ENCODE measurements at regions of chr1 and their contacts with region 1.

Region 1: DNA sequence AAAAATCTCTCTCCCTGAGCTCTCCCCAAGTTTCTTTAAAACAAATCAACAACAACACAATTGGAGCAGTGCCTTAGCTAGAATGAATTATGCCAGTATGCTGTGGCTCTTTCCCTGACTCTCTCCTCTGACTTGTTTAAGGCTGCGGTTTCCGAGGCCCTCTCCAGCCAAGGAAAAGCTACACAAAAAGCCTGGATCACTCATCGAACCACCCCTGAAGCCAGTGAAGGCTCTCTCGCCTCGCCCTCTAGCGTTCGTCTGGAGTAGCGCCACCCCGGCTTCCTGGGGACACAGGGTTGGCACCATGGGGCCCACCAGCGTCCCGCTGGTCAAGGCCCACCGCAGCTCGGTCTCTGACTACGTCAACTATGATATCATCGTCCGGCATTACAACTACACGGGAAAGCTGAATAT is 1.9 kb downstream of the S1PR1 start:
- DNase-seq: peak; percentile 95
- ATAC-seq: peak; percentile 30
- H3K4me3 Mint-ChIP-seq: peak overlapping the region; percentile 89
- H3K27ac Mint-ChIP-seq: peak overlapping the region; percentile 99
- H3K4me1 Mint-ChIP-seq: peaks cover 51% of the 10 kb centered on the region
- H3K27me3 Mint-ChIP-seq: no peaks in the 10 kb centered on the region

Region 2: DNA sequence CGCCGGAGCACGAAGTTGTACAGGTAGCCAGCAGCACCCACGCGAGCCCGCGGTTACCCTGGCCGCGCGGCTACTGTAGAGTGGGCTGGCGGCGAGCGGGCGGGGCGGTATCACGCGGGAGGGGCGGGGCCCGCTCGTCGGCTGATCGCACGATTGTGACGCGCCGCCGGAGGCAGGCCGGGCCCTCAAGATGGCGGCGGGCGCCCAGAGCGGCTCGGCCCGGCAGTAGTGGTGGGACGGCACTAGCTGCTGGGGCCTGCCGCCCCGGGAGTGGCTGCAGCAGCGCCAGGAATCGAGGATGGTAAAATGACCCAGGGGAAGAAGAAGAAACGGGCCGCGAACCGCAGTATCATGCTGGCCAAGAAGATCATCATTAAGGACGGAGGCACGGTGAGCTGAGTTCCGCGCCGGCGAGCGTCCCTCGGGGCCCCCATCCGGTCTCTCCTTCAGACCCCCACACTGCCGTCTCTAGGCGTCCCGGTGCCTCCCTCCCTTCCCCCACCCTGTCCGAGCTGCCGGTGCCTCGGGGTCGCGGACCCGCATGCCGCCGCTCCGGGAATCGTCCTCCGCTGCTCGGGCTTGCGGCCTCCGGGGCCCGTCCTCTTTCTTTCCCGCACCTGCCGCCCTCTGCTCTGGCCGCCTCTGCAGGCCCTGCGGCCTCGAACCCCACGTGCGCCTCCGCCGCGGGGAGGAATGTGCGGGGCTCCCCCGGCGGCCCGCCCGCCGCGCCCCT is 1200.6 kb before region 1 on chr1:
- CTCF ChIA-PET with region 1: no interaction called
- POLR2A ChIA-PET with region 1: no interaction called
- intact Hi-C with region 1: loop called (anchors 5 kb)
- DNase-seq: peak; percentile 95
- ATAC-seq: peak; percentile 80
- H3K4me3 Mint-ChIP-seq: peak overlapping the region; percentile 95
- H3K27ac Mint-ChIP-seq: peak overlapping the region; percentile 98
- H3K4me1 Mint-ChIP-seq: peaks cover 51% of the 10 kb centered on the region
- H3K27me3 Mint-ChIP-seq: no peaks in the 10 kb centered on the region

Region 3: DNA sequence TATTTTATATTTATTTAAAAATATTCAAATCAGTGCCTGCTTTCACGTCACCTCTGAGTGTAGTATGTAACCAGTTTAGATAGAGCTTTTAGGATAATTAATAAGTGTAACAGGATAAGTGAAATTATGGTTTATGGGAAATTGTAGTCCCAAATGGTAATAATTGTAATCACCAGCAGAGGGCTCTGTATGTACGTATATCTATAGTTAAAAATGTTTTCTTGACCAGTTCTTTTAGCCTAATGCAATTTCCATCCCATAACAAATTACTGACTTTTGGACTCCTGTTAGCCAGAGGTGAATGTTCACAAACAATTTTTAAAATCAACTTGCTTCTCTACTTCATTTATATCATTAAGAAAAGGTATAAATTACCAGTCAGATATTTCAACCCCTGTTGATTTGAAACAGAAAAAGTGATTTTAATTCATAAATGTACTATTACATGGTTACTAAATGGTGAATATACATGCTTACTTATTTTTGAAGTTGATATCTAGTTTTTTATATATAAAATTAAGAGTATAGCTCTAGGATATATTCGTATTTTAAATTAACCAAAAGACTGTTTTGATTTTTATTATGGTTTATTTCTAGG is 317.5 kb before region 1 on chr1:
- CTCF ChIA-PET with region 1: interaction called, 7 read pairs
- POLR2A ChIA-PET with region 1: no interaction called
- intact Hi-C with region 1: loop called (anchors 1 kb)
- DNase-seq: no peak
- ATAC-seq: no peak
- H3K4me3 Mint-ChIP-seq: no peak overlapping the region
- H3K27ac Mint-ChIP-seq: peak overlapping the region; percentile 70
- H3K4me1 Mint-ChIP-seq: peaks cover 43% of the 10 kb centered on the region
- H3K27me3 Mint-ChIP-seq: no peaks in the 10 kb centered on the region

Region 4: DNA sequence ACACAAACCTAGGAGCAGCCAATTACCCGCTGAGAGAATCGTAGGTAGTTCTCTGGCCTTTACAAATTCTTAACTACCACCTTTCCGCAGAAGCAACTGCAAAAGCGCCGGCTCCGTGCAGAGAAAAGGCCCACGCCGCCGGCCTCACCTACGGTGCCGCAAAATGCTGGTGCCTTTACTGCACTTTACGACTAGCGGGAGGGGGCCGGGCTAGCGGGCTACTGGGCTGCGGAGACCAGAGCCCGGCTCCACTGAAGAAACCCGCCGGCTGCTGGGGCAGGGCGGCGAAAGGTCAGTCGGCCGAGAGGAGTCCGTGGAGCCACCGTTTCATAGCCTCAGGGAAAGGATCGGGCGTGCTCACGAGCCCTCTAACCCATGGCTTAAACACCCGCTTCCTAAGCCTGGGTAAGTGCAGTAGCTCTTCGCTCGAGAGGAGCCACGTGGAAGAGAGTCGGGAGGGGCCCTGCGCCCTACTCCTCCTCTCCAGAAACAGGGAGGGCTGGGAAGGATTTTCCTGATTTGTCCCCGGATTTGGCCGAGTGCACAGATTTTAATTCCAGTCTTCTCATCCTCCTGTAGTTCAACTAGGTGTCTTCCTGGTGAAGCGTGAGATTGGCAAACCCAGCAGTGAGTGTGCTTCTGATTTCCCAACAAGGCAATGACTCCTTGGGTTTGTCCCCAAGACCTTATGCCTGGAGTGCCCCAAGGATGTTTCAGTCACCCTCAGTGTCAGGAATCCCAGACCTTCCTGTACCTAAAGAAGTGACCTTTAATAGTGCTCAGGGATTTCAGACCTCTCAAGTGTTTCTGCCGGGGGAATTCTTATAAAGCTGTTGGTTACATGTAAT is 212.8 kb before region 1 on chr1 and contains the start of gene DPH5:
- CTCF ChIA-PET with region 1: interaction called, 5 read pairs
- POLR2A ChIA-PET with region 1: interaction called, 6 read pairs
- intact Hi-C with region 1: loop called (anchors 1 kb)
- DNase-seq: peak; percentile 95
- ATAC-seq: peak; percentile 96
- H3K4me3 Mint-ChIP-seq: peak within 1 kb of the TSS; percentile 93
- H3K27ac Mint-ChIP-seq: peak within 1 kb of the TSS; percentile 98
- H3K4me1 Mint-ChIP-seq: peaks cover 55% of the 10 kb centered on the region
- H3K27me3 Mint-ChIP-seq: no peaks in the 10 kb centered on the region
- total RNA-seq, gene DPH5: 48.4 to 59.6 TPM

Region 5: GRCh38 chr1:101136739-101137138 is 101.9 kb before region 1 on chr1:
- CTCF ChIA-PET with region 1: interaction called, 32 read pairs
- POLR2A ChIA-PET with region 1: interaction called, 13 read pairs
- intact Hi-C with region 1: loop called (anchors 1 kb)
- DNase-seq: peak; percentile 45
- ATAC-seq: peak; percentile 85
- H3K4me3 Mint-ChIP-seq: peak overlapping the region; percentile 38
- H3K27ac Mint-ChIP-seq: peak overlapping the region; percentile 91
- H3K4me1 Mint-ChIP-seq: peaks cover 69% of the 10 kb centered on the region
- H3K27me3 Mint-ChIP-seq: no peaks in the 10 kb centered on the region

Region 6: GRCh38 chr1:101205457-101205856 is 33.2 kb before region 1 on chr1:
- CTCF ChIA-PET with region 1: interaction called, 5 read pairs
- POLR2A ChIA-PET with region 1: interaction called, 48 read pairs
- intact Hi-C with region 1: loop called in 1 of 2 experiments (anchors 1 kb)
- DNase-seq: no peak
- ATAC-seq: peak; percentile 76
- H3K4me3 Mint-ChIP-seq: no peak overlapping the region
- H3K27ac Mint-ChIP-seq: peak overlapping the region; percentile 81
- H3K4me1 Mint-ChIP-seq: peaks cover 28% of the 10 kb centered on the region
- H3K27me3 Mint-ChIP-seq: no peaks in the 10 kb centered on the region

Region 7: GRCh38 chr1:101357444-101357986 is 118.8 kb after region 1 on chr1:
- CTCF ChIA-PET with region 1: interaction called, 4 read pairs
- POLR2A ChIA-PET with region 1: no interaction called
- intact Hi-C with region 1: loop called (anchors 2 to 5 kb)
- DNase-seq: peak; percentile 76
- ATAC-seq: peak; percentile 100
- H3K4me3 Mint-ChIP-seq: no peak overlapping the region
- H3K27ac Mint-ChIP-seq: no peak overlapping the region
- H3K4me1 Mint-ChIP-seq: peaks cover 8% of the 10 kb centered on the region
- H3K27me3 Mint-ChIP-seq: no peaks in the 10 kb centered on the region

Measured in activated CD4-positive, alpha-beta T cell treated with anti-CD3 and anti-CD28 coated beads for 36 hours (primary cell).